Mammary epithelial cell (primary cell): ENCODE measurements at regions of chr12 and their contacts with region 1.

Region 1: DNA sequence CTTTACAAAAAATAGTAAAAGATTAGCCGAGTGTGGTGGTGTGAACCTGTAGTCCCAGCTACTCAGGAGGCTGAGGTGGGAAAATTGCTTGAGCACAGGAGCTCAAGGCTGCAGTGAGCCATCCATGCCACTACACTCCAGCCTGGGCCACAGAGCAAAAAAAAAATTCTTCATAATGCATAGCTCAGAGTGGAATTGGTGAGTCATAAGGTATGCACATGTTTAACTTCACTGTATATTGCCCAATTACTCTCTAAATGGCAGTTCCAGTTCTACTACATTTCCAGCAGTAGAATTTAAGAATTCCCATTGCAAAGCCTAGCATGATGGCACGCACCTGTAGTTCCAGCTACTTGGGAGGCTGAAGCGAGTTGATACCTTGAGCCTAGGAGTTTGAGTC is 26.9 kb upstream of the CLIP1 start:
- DNase-seq: peak; percentile 92
- H3K4me3 ChIP-seq: no peak overlapping the region
- H3K27ac ChIP-seq: no peak overlapping the region
- H3K4me1 ChIP-seq: peaks cover 5% of the 10 kb centered on the region
- H3K27me3 ChIP-seq: no peaks in the 10 kb centered on the region
- CTCF ChIP-seq: no peak

Region 2: GRCh38 chr12:122421821-122422729 is 27.3 kb before region 1 on chr12 and contains the start of gene CLIP1:
- CTCF ChIA-PET with region 1: no interaction called
- dilution Hi-C with region 1: no loop called
- in situ Hi-C with region 1: no loop called
- intact Hi-C with region 1: loop called (anchors 2 kb)
- DNase-seq: peak; percentile 68
- H3K4me3 ChIP-seq: peak within 1 kb of the TSS; percentile 70 to 79 (median 75)
- H3K27ac ChIP-seq: peak within 1 kb of the TSS; percentile 95
- H3K4me1 ChIP-seq: peaks cover 21% of the 10 kb centered on the region
- H3K27me3 ChIP-seq: no peaks in the 10 kb centered on the region
- CTCF ChIP-seq: peak in 1 of 2 donors; percentile 56
- total RNA-seq, gene CLIP1: 86.1 to 97.4 TPM